Mammary epithelial cell (primary cell): ENCODE measurements at regions of chr21 and their contacts with region 1.

Region 1: GRCh38 chr21:35833991-35834390 is 226.3 kb downstream of the SETD4 start:
- DNase-seq: no peak
- H3K4me3 ChIP-seq: no peak overlapping the region
- H3K27ac ChIP-seq: no peak overlapping the region
- H3K4me1 ChIP-seq: no peaks in the 10 kb centered on the region
- H3K27me3 ChIP-seq: no peaks in the 10 kb centered on the region
- CTCF ChIP-seq: no peak

Region 2: GRCh38 chr21:35438643-35439404 is 395.2 kb before region 1 on chr21:
- CTCF ChIA-PET with region 1: no interaction called
- dilution Hi-C with region 1: no loop called
- in situ Hi-C with region 1: loop called in 1 of 2 experiments (anchors 10 kb)
- intact Hi-C with region 1: loop called (anchors 10 kb)
- DNase-seq: peak; percentile 55
- H3K4me3 ChIP-seq: no peak overlapping the region
- H3K27ac ChIP-seq: no peak overlapping the region
- H3K4me1 ChIP-seq: no peaks in the 10 kb centered on the region
- H3K27me3 ChIP-seq: no peaks in the 10 kb centered on the region
- CTCF ChIP-seq: no peak